Testis (tissue), 5 donors: ENCODE measurements at regions of chr11 and their contacts with region 1.

Region 1: DNA sequence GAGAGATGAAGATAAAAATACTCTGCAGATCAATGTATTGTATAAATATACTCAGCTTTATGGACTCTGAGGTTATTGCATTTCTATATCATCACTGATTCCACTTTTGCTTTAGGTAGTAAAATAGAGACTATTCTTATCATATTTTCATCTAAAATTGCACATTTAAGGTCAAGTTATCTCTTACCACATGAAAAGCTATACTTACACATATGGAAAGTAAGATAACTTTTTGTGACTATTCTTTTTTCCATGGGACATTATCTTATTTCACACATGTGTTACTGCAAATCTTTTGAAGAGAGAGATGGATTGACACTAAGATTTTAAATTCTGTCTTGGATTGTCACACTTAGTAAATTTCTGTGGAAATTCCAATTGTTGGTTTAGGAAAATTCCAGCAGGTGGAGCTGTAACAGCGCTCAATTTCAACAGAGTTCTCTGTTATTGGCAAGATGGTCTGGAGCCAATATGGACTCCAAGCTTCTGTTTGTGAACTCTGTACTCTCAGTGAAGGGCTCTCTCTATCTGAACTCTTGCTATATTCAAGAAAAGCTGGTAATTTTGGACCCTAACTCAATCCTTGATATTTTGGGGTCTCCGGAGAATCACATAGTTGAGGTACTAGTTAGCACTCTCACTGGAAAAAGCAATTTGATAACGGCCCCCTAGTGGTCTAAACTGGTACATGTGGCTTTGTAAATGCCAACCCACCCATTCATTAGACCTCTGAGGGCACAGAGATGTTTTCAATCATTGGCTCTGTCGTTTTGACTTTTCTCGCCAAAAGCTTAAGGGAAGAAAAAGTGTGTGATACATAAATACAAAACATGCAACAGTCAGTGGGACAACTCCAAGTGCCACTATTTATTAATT is 429.7 kb downstream of the ETS1 start:
- DNase-seq: peak; percentile 76
- H3K4me3 ChIP-seq: no peak overlapping the region
- H3K27ac ChIP-seq: no peak overlapping the region
- H3K4me1 ChIP-seq: no peaks in the 10 kb centered on the region
- H3K27me3 ChIP-seq: no peaks in the 10 kb centered on the region
- CTCF ChIP-seq: peak; percentile 73 to 94 (median 85)
- POLR2A ChIP-seq: no peak

Region 2: DNA sequence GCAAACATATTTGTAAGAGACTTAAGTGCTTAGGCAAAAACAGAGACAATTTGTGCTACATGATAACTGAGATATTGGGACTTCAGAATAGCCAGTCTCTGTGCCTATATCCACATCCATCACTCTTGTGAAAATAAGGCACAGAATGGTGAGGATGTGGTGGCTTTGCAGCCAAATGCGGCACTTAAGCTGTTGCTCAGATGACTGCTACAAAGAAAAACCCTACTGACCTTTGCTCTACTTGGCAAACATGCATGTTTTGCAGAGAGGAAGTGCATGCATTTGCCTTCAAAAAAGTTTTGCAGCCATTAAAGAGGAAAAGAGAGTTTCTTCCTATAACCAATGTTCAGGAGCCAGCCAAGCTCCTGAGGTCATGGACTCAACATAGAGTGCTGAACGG is 482.1 kb before region 1 on chr11:
- intact Hi-C with region 1: no loop called
- DNase-seq: no peak
- H3K4me3 ChIP-seq: no peak overlapping the region
- H3K27ac ChIP-seq: no peak overlapping the region
- H3K4me1 ChIP-seq: no peaks in the 10 kb centered on the region
- H3K27me3 ChIP-seq: no peaks in the 10 kb centered on the region
- CTCF ChIP-seq: no peak
- POLR2A ChIP-seq: no peak

Region 3: DNA sequence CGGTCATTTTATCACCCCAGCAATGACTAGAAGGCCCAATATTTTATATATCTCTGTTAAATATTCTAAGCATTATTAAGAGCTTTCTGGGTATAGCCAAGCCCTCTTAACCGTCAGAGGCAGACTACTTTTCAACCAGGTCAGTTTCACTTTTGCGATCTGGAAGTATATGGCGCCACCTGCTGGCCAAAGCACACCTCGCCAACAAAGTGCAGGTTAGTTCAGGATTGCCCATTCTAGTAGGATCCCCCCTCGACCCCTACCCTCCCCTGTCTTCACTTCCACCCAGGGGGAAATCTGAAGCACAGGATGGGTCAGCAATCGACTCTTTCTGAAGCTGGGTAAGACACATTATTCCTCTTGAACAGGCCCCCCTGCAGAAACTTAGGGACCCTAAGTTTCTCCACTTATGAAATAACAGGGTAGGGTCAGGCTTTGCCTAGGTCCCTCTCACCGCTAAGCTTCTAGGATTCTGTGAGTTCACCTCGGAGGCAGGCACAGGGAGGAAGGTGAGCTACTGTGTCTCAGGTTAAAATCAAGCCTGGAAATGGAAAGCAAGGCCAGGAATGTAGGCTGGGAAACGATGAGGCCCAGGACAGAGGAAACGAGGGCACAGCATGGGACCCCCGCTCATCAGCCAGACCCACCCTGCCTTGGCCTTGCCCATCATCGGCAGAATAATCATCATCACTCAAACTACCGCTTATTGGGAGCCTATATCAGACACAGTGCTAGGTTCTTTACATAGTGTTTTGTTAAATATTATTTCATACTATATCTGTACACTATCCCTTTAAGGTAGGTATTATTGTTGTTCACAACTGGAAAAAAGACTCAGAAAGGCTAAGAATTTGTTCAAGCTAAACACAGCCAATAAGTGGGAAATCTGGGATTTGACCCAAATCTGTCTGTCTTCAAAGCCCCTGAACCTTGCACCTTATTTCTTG is 673.8 kb after region 1 on chr11:
- intact Hi-C with region 1: loop called (anchors 10 kb)
- DNase-seq: peak; percentile 90
- H3K4me3 ChIP-seq: no peak overlapping the region
- H3K27ac ChIP-seq: no peak overlapping the region
- H3K4me1 ChIP-seq: peaks cover 7% of the 10 kb centered on the region
- H3K27me3 ChIP-seq: no peaks in the 10 kb centered on the region
- CTCF ChIP-seq: peak; percentile 83 to 97 (median 88)
- POLR2A ChIP-seq: no peak